ENCODE measurements at regions of chr13 and their contacts with region 1.

Region 1: GRCh38 chr13:104318121-104318520 is 1251.9 kb upstream of the SLC10A2 start:
- DNase-seq: peak; percentile 34
- H3K4me3 ChIP-seq: no peak overlapping the region
- H3K27ac ChIP-seq: no peak overlapping the region
- H3K4me1 ChIP-seq: peaks cover 14% of the 10 kb centered on the region
- H3K27me3 ChIP-seq: no peaks in the 10 kb centered on the region
- CTCF ChIP-seq: peak; percentile 30 to 55

Region 2: DNA sequence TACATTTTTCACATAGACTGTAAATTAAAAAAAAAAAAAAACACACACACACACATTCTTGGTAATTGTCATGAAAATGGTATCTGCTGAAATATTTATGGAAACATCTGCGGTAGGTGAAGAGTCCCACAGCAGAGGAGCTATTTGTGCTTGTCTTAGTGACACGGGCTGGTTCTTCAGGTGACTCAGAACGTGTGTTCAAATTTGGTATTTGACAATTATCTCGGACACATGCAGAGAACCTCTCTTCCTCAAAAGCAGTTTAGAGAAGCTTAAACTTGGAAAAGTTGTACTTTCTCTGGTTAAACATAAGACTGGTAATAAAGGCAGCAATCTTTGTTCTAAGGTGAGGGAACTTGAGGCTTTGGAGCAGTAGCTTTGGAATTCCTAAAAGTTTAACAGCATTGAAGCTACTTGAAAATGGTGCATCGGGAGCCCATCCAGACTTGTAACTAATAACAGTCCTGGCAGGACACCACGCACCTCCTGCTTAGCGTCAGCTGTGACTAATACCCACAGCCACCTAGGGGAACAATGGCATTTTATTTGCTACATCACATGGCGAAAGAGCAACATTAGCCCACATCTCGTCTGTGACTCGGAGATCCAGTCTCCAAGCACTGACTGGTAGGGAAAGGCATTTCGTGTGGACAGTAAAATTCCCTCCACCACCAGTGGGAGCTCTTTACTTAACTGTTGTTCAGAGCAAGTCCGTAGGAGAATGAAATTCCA is 253.2 kb after region 1 on chr13:
- CTCF ChIA-PET with region 1: no interaction called
- dilution Hi-C with region 1: no loop called
- in situ Hi-C with region 1: no loop called
- intact Hi-C with region 1: loop called (anchors 5 kb)
- DNase-seq: peak; percentile 90
- H3K4me3 ChIP-seq: no peak overlapping the region
- H3K27ac ChIP-seq: no peak overlapping the region
- H3K4me1 ChIP-seq: peaks cover 12% of the 10 kb centered on the region
- H3K27me3 ChIP-seq: no peaks in the 10 kb centered on the region
- CTCF ChIP-seq: peak; percentile 54 to 82